Psoas muscle (tissue), 8 donors: ENCODE measurements at regions of chr14 and their contacts with region 1.

Region 1: DNA sequence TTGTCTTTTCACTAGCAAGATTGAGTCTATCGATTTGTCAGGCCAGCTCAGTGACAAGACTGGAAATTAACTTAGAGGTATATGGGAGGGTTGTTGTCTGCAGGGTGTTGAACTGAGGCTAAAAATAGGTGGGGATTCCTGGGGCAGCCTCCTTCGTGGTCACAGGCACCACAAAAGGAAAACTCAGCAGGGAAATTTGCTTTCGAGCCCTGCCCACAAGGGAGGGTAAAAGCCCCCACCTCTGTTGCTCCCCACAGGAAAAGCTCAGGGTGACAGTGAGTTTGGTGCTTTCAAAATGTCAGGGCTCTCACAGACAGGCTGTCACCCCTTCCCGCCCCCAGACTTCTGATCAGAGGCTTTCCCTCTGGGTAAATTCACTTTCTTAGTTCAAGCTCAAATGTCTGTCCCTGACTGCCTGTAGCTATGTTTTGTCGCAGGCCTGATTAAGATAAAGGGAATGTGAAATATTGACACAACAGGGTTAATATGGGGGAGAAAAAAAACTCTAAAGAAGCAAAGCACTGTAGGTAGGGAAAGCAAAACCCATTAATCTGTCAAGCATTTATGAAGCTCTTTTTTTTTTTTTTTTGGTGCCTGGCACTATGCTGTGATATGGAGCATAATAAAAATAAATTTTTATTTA is 11.7 kb upstream of the NFKBIA start:
- DNase-seq: no peak
- ATAC-seq: no peak
- H3K4me3 ChIP-seq: no peak overlapping the region
- H3K27ac ChIP-seq: no peak overlapping the region
- H3K4me1 ChIP-seq: no peaks in the 10 kb centered on the region
- H3K27me3 ChIP-seq: no peaks in the 10 kb centered on the region
- CTCF ChIP-seq: no peak

Region 2: DNA sequence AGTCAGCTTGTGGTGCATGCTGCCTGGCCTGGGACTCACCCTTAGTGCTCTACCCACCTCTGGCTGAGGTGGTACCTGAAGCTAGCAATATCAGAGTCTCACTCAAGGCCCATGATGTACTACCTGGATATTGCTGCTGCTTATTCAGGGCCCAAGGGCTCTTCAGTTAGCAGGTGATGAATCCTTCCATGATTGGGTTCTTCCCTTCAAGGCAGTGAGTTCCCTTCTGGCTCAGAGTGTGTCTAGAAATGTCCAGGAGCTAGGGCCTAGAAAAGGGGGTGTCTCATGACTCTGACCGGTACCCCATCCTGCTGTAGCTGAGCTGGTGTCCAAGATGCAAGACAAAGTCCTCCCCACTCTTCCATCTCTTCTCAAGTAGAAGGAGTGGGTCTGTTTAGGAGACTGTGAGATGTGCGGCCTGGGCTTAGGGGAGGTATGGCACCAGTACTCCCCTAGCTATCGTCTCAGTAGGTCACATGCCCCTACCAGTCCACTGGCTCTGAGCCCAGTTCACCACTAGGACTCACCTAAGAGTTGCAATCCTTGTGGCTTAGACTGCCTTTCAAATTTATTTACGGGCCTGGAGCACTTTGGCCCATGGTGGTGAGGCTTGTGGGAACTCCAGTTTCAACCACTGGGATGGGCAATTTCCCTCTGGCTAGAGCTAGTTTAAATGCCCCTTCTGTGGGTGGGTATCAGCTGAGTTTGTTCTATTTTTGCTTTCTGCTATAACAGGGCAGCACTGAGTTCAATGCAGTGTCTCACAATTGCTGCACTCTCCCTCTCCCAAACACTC is 281.7 kb before region 1 on chr14:
- intact Hi-C with region 1: loop called in 1 of 2 experiments (anchors 5 kb)
- DNase-seq: no peak
- ATAC-seq: no peak
- H3K4me3 ChIP-seq: no peak overlapping the region
- H3K27ac ChIP-seq: no peak overlapping the region
- H3K4me1 ChIP-seq: no peaks in the 10 kb centered on the region
- H3K27me3 ChIP-seq: no peaks in the 10 kb centered on the region
- CTCF ChIP-seq: no peak

Region 3: DNA sequence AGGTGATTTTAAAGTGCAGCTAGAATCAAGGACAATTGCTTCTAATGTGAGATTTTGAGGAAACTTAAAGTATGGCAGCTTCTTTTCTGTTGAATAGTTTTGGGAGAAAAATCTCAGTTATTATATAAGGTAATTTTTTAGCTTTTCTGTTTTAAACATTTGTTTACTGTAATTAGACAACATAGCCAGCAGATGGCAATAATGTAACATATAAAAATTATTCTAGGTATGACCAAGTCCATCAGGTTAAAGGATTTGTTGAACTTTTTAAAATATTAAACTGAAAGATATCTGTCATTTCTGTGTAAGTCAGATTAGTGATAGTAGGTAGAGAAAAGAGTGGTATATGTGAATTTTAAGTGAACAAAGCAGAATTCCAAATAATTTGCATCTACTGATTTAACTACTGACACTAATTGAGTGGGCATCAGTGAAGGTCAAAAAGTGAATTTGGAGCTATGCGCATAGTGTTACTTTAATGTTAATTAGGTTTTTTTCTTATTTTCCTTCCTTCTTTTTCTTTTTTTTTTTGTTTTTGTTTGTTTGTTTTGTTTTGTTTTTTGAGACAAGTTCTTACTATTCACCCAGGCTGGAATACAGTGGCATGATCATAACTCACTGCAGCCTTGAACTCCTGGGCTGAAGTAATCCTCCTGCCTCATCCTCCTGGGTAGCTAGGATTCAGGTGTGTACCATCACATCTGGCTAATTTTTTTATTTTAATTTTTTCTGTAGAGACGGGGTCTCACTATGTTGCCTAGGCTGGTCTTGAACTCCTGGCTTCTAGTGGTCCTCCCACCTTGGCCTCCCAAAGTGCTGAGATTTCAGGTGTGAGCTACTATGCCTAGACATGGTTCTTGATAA is 275.3 kb before region 1 on chr14:
- intact Hi-C with region 1: loop called (anchors 2 to 5 kb)
- DNase-seq: no peak
- ATAC-seq: peak in 1 of 4 donors; percentile 67
- H3K4me3 ChIP-seq: no peak overlapping the region
- H3K27ac ChIP-seq: no peak overlapping the region
- H3K4me1 ChIP-seq: no peaks in the 10 kb centered on the region
- H3K27me3 ChIP-seq: no peaks in the 10 kb centered on the region
- CTCF ChIP-seq: peak; percentile 63

Region 4: GRCh38 chr14:35261774-35262173 is 154.5 kb before region 1 on chr14:
- intact Hi-C with region 1: loop called in 1 of 2 experiments (anchors 10 kb)
- DNase-seq: no peak
- ATAC-seq: peak in 2 of 4 donors; percentile 57 to 79
- H3K4me3 ChIP-seq: no peak overlapping the region
- H3K27ac ChIP-seq: no peak overlapping the region
- H3K4me1 ChIP-seq: no peaks in the 10 kb centered on the region
- H3K27me3 ChIP-seq: no peaks in the 10 kb centered on the region
- CTCF ChIP-seq: peak; percentile 28

Region 5: DNA sequence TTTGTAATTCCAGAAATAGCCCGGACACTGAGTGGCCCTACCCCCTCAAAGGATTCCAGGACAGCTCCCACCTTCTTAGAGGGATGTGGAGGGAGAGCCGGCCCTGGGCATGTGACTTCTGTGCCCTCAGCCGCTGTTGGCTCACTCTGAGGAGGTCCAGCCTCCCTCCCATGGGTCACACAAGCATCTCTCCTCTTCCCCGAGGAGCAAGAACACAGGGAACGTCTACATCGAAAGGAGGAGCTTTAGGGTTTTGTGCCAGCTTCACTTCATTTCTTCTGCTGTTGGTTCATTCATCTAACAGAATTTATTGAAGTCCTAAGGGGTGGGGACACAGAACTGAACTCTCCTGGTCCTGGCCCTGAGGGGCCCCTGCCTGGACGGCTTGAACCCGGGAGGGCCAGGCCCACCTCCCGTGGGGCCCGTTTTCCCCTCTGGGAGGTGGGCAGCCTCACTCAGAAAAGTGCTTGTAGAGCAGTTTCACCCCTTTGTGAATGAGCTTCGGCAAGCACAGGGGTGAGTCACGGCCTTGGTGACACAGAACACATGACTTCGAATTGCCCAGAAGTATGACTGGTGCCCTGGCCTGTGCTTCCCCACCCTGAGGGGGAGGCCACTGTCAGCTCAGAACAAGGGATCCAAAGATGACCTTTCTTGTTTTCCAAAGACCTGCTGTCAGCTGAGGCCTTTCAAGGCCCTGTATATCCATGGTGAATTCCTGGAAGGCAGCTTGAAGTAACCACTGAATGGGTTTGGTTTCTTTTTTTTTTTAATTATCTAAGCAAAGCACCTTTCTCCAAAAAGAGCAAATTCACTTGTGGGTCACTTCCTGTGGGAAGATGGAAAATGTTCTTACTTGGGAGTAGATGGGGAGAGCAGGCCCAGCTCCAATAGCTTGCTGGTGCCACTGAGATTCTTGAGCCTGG is 50.8 kb before region 1 on chr14:
- intact Hi-C with region 1: no loop called
- DNase-seq: peak; percentile 75 to 82
- ATAC-seq: peak; percentile 85 to 93 (median 90)
- H3K4me3 ChIP-seq: no peak overlapping the region
- H3K27ac ChIP-seq: peak overlapping the region; percentile 62
- H3K4me1 ChIP-seq: peaks cover 22% of the 10 kb centered on the region
- H3K27me3 ChIP-seq: no peaks in the 10 kb centered on the region
- CTCF ChIP-seq: no peak

Region 6: DNA sequence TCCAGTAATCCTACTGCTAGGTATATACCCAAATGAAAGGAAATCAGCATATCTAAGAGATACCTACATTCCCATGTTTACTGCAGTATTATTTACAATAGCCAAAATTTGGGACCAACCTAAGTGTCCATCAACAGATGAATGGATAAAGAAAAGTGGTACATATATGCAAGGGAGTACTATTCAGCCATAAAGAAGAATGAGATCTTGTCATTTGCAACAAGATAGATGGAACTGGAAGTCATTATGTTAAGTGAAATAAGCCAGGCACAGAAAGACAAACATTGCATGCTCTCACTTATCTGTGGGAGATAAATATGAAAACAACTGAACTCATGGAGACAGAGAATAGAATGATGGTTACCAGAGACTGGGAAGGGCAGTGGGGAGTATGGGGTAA is 227.3 kb after region 1 on chr14:
- intact Hi-C with region 1: no loop called
- DNase-seq: no peak
- ATAC-seq: no peak
- H3K4me3 ChIP-seq: no peak overlapping the region
- H3K27ac ChIP-seq: no peak overlapping the region
- H3K4me1 ChIP-seq: no peaks in the 10 kb centered on the region
- H3K27me3 ChIP-seq: no peaks in the 10 kb centered on the region
- CTCF ChIP-seq: no peak